ENCODE measurements at regions of chr6 and their contacts with region 1.

Region 1: GRCh38 chr6:63307581-63308246 is 12.1 kb downstream of the LGSN start:
- DNase-seq: peak; percentile 72
- ATAC-seq: peak; percentile 96
- H3K4me3 ChIP-seq: peak overlapping the region; percentile 47
- H3K27ac ChIP-seq: no peak overlapping the region
- H3K4me1 ChIP-seq: no peaks in the 10 kb centered on the region
- H3K27me3 ChIP-seq: no peaks in the 10 kb centered on the region
- CTCF ChIP-seq: peak; percentile 70

Region 2: DNA sequence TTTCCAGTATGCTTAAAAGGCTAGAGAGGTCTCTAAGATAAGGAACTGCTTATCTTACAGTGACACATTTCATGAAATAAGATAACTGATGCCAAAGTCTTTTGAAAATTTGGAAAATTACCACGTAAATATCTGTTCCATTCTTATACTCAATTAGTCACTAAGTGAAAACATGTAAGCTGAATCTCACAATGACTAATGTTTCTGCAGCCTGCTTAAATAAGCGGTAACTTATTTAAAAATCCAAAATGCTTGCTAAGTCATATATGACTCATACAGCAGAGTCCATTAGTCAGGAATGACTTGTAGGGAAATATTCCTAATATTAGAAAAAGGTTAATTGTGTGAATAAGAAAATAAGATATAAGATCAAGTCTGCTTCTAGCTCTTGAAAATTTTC is 39.9 kb after region 1 on chr6:
- CTCF ChIA-PET with region 1: no interaction called
- POLR2A ChIA-PET with region 1: no interaction called
- intact Hi-C with region 1: loop called (anchors 5 kb)
- DNase-seq: peak; percentile 83
- ATAC-seq: peak; percentile 89
- H3K4me3 ChIP-seq: no peak overlapping the region
- H3K27ac ChIP-seq: peak overlapping the region; percentile 82
- H3K4me1 ChIP-seq: peaks cover 28% of the 10 kb centered on the region
- H3K27me3 ChIP-seq: no peaks in the 10 kb centered on the region
- CTCF ChIP-seq: no peak